ENCODE measurements at regions of chr6 and their contacts with region 1.

Region 1: DNA sequence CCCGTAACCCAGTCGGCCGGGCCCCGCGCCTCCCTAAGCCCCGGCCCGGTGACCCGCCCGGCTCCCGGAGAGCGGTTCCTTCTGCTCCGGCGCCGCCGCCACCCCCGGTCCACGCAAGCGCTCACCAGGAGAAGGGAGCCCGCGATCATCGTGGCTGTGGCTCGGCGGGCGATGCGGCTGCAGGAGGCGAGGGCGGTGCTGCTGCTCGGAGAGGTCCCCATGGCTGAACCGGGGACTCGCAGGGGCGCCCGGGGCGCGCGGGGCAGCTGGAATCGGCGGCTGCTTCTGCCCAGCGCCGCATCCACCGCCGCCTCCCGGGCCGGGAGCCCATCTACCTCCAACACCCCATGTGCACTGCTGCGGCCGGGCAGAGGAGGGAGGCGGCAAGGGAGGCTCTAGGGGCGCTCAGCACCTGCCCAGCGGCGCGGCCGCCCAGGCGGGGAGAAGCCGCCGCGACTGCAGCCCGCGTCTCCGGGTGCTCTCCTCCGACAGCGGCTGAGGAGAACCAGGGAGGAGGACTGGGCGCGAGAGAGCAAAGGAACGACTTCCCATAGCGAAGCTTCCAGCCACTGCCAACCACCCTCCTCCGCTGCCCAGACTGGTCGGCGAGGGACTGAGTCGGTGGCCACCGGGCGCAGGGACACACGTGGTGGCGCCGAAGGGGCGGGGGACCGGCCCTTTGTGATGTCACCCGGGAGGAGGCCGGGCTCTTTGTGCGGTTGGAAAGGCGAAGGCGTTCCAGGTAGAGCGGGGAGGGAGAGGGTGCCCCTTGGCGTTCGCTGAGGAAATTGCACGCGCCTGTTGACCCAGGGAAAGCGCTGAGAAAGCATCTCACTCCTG is at the start of gene TNFRSF21:
- DNase-seq: peak; percentile 95
- ATAC-seq: peak; percentile 89
- H3K4me3 ChIP-seq: peak within 1 kb of the TSS; percentile 95
- H3K27ac ChIP-seq: peak within 1 kb of the TSS; percentile 81
- H3K4me1 ChIP-seq: peaks cover 33% of the 10 kb centered on the region
- H3K27me3 ChIP-seq: no peaks in the 10 kb centered on the region
- CTCF ChIP-seq: peak; percentile 85
- total RNA-seq, gene TNFRSF21: 106 and 120 TPM in 2 replicates

Region 2: GRCh38 chr6:46848684-46849360 is 460.7 kb before region 1 on chr6:
- CTCF ChIA-PET with region 1: no interaction called
- POLR2A ChIA-PET with region 1: no interaction called
- intact Hi-C with region 1: loop called (anchors 10 kb)
- DNase-seq: peak; percentile 94
- ATAC-seq: peak; percentile 93
- H3K4me3 ChIP-seq: peak overlapping the region; percentile 46; the same call in 1 of the 2 replicates
- H3K27ac ChIP-seq: peak overlapping the region; percentile 70
- H3K4me1 ChIP-seq: peaks cover 32% of the 10 kb centered on the region
- H3K27me3 ChIP-seq: no peaks in the 10 kb centered on the region
- CTCF ChIP-seq: peak; percentile 97

Region 3: DNA sequence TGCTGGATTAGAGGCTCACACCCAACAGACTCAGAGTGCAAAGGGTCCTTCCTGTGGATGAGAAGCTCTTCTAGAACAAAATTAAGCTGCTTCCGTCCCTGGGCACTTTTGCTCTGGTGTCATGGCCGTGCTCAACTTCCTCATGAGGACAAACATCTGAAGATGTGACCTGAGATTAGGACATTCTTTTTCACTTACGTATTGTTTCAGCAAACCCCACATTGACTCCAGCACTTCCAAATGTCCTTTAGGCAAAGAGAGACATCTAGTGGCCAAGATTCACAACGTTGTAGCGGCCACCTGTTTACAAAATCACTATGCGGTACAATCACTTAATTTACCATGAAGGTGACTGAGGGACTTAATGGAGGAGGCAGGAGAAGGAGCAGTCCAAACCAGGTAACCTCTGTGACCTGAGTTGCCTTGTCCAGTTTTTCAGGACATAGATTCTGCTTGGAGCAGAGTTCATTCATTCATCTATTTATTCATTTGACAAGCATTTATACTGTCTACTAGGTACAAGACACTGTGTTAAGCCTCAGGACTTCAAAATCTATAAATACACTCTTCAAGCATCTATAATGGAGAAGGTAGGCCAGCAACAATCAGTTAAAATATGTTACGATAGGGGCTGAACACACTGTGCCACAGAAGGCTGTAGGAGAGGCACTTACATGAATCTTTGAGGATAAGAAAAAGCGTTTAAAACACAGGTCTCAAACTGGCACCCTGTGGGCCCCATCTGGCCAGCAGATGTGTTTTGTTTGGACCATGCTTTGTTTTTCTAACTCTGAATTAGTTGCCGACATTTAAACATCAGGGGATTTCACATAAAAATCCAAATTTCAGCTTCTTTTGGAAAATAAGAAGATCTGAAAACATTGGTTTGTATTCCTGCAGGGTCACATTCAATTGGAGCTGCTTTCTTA is 261.8 kb before region 1 on chr6:
- CTCF ChIA-PET with region 1: no interaction called
- POLR2A ChIA-PET with region 1: interaction called, 10 read pairs
- intact Hi-C with region 1: loop called (anchors 5 kb)
- DNase-seq: peak; percentile 97
- ATAC-seq: peak; percentile 57
- H3K4me3 ChIP-seq: no peak overlapping the region
- H3K27ac ChIP-seq: peak overlapping the region; percentile 95
- H3K4me1 ChIP-seq: peaks cover 54% of the 10 kb centered on the region
- H3K27me3 ChIP-seq: no peaks in the 10 kb centered on the region
- CTCF ChIP-seq: peak; percentile 94

Region 4: DNA sequence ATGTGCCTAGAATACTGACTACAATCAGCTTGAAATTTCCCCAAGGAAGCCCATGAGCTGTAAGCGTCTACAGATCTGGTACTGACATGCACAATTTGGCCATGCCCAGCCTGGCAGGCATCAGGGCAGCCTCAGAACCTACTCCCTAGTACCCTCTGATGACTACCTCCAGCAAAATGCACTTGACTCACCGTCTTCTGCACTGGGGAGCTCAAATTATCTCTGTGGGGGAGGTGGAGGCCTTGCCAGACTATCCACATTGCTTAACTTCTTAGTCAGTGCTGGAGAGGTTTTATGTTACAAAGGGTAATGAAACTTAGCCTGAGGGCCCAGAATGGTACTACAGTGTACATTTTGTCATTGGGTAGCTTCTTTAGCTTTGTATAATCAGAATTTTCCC is 141.3 kb before region 1 on chr6:
- CTCF ChIA-PET with region 1: no interaction called
- POLR2A ChIA-PET with region 1: interaction called, 3 read pairs
- intact Hi-C with region 1: loop called (anchors 10 kb)
- DNase-seq: peak; percentile 98
- ATAC-seq: peak; percentile 99
- H3K4me3 ChIP-seq: no peak overlapping the region
- H3K27ac ChIP-seq: peak overlapping the region; percentile 91
- H3K4me1 ChIP-seq: peaks cover 50% of the 10 kb centered on the region
- H3K27me3 ChIP-seq: no peaks in the 10 kb centered on the region
- CTCF ChIP-seq: no peak

Region 5: GRCh38 chr6:47242483-47243386 is 66.8 kb before region 1 on chr6:
- CTCF ChIA-PET with region 1: no interaction called
- POLR2A ChIA-PET with region 1: no interaction called
- intact Hi-C with region 1: loop called (anchors 5 kb)
- DNase-seq: peak; percentile 87
- ATAC-seq: peak; percentile 95
- H3K4me3 ChIP-seq: no peak overlapping the region
- H3K27ac ChIP-seq: peak overlapping the region; percentile 63
- H3K4me1 ChIP-seq: peaks cover 17% of the 10 kb centered on the region
- H3K27me3 ChIP-seq: no peaks in the 10 kb centered on the region
- CTCF ChIP-seq: no peak

Region 6: GRCh38 chr6:47321577-47321976 is 12.1 kb after region 1 on chr6:
- CTCF ChIA-PET with region 1: no interaction called
- POLR2A ChIA-PET with region 1: no interaction called
- intact Hi-C with region 1: no loop called
- DNase-seq: no peak
- ATAC-seq: no peak
- H3K4me3 ChIP-seq: no peak overlapping the region
- H3K27ac ChIP-seq: no peak overlapping the region
- H3K4me1 ChIP-seq: no peaks in the 10 kb centered on the region
- H3K27me3 ChIP-seq: no peaks in the 10 kb centered on the region
- CTCF ChIP-seq: no peak

Region 7: DNA sequence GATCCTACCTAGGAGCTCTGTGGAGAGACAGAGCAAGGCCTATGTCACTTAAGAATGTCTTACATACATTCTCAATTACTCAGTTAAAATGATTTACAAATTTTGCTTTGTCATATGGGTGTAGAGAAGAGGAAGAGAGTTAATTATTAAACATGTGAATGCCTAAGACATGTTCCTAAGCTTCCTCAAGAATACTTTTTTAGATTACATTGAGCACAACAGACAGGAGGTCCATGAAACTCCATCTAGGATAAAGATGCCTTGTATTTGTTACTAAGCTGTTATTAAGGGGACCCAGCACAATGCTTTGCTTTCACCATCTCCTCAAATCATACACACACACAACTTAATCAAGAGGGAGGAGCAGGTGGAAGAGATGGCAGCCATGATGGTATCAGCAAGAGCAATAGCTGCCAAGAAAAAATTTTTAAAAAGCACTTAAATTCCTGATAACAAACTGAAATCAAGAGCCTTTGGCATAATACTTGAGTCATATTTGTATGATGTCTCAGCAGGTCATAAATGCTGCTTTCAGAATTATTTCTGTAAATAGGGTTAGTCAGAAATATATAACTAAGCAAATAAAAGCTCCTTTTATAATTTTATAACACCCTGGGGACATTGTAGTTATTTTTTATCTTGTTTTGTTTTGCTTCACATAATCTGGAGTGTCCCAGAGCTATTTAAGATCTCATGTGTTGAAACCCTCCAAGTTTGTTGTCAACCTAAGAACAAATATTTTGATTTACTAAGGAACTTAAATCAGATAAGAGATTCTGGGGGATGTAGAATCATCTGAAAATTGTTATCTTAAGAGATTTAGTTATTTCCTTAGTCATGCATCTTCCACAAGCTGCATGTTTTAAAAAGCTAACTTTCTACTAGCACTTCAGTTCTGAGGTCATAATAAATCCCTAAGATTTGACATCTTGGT is 98.1 kb after region 1 on chr6:
- CTCF ChIA-PET with region 1: no interaction called
- POLR2A ChIA-PET with region 1: interaction called, 3 read pairs
- intact Hi-C with region 1: loop called (anchors 1 kb)
- DNase-seq: peak; percentile 95
- ATAC-seq: peak; percentile 63
- H3K4me3 ChIP-seq: no peak overlapping the region
- H3K27ac ChIP-seq: peak overlapping the region; percentile 95
- H3K4me1 ChIP-seq: peaks cover 51% of the 10 kb centered on the region
- H3K27me3 ChIP-seq: no peaks in the 10 kb centered on the region
- CTCF ChIP-seq: no peak

Measured in PC-3 (cell line).